Activated CD4-positive, alpha-beta memory T cell treated with anti-CD3 and anti-CD28 coated beads for 36 hours (primary cell): ENCODE measurements at regions of chr11 and their contacts with region 1.

Region 1: DNA sequence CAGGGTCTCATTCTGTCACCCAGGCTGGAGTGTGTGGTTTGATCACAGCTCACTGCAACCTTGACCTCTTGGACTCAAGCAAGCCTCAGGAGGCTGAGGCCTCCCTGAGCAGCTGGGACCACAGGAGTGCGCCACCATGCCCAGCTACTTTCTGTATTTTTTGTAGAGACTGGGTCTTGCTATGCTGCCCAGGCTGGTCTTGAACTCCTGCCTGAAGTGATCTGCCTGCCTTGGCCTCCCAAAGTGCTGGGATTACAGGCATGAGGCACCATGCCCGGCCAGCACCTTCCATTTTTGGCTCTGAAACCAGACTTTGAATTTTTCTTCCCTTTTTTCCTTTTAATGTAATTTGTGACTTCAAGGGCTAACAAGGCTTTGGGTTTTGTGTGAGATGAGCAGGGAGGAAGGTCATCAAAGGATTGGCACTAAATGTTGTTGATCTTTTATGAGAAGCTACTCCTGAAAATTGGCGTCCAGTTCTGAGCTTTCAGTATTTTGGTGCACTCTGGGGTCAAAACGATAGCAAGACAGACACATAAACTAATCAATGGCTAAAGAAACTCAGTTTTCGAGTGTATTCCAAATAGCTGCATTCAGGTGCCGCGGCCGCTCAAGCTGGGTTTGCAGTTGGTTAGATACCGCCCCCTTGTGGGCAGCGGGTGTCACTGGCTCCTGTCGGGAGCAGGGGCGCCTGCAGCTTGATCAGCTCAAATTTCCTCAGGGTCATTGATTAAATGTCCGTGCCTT is 51.9 kb upstream of the CLMP start:
- DNase-seq: peak; percentile 89
- H3K4me3 Mint-ChIP-seq: no peak overlapping the region
- H3K27ac Mint-ChIP-seq: no peak overlapping the region
- H3K4me1 Mint-ChIP-seq: peaks cover 6% of the 10 kb centered on the region
- H3K27me3 Mint-ChIP-seq: peaks cover 4% of the 10 kb centered on the region

Region 2: DNA sequence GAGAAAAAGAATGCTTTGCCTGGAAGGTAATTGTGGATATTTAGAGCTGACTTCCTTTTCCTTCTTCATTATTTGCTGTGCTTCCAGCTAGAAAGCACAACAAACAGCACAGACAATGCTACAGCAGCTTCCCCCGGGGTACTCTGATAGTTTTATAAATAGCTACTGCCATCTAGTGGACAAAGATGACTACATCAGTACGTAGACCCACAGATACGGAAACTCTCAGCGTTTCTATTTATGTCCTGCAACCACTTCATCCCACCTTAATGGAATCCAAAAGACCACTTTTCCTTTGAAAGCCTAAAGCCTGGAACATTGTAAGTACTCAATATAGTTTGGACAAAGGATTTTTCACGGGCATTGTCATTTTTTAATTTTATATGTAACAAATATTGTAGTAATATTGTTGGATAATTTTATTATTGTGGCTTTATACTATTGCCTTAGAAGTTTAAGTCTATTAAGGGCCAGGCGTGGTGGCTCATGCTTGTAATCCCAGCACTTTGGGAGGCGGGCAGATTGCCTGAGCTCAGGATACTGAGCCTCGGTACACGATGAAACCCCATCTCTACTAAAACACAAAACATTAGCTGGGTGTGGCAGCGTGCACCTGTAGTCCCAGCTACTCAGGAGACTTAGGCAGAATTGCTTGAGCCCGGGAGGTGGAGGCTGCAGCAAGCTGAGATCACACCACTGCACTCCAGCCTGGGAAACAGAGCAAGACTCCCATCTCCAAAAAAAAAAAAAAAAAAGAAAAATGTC is 192.4 kb before region 1 on chr11:
- CTCF ChIA-PET with region 1: interaction called, 20 read pairs
- POLR2A ChIA-PET with region 1: no interaction called
- intact Hi-C with region 1: no loop called
- DNase-seq: no peak
- H3K4me3 Mint-ChIP-seq: no peak overlapping the region
- H3K27ac Mint-ChIP-seq: peak overlapping the region; percentile 100
- H3K4me1 Mint-ChIP-seq: peaks cover 47% of the 10 kb centered on the region
- H3K27me3 Mint-ChIP-seq: no peaks in the 10 kb centered on the region

Region 3: GRCh38 chr11:123110356-123110755 is 136.6 kb before region 1 on chr11:
- CTCF ChIA-PET with region 1: interaction called, 351 read pairs
- POLR2A ChIA-PET with region 1: no interaction called
- intact Hi-C with region 1: loop called (anchors 1 kb)
- DNase-seq: no peak
- H3K4me3 Mint-ChIP-seq: no peak overlapping the region
- H3K27ac Mint-ChIP-seq: no peak overlapping the region
- H3K4me1 Mint-ChIP-seq: peaks cover 4% of the 10 kb centered on the region
- H3K27me3 Mint-ChIP-seq: no peaks in the 10 kb centered on the region

Region 4: GRCh38 chr11:123152956-123153355 is 94.0 kb before region 1 on chr11:
- CTCF ChIA-PET with region 1: interaction called, 11 read pairs
- POLR2A ChIA-PET with region 1: no interaction called
- intact Hi-C with region 1: no loop called
- DNase-seq: no peak
- H3K4me3 Mint-ChIP-seq: no peak overlapping the region
- H3K27ac Mint-ChIP-seq: no peak overlapping the region
- H3K4me1 Mint-ChIP-seq: no peaks in the 10 kb centered on the region
- H3K27me3 Mint-ChIP-seq: peaks cover 7% of the 10 kb centered on the region

Region 5: GRCh38 chr11:123235117-123235655 is 11.7 kb before region 1 on chr11:
- CTCF ChIA-PET with region 1: interaction called, 16 read pairs
- POLR2A ChIA-PET with region 1: no interaction called
- intact Hi-C with region 1: no loop called
- DNase-seq: peak; percentile 58
- H3K4me3 Mint-ChIP-seq: no peak overlapping the region
- H3K27ac Mint-ChIP-seq: no peak overlapping the region
- H3K4me1 Mint-ChIP-seq: peaks cover 15% of the 10 kb centered on the region
- H3K27me3 Mint-ChIP-seq: no peaks in the 10 kb centered on the region

Region 6: GRCh38 chr11:123286761-123287160 is 39.8 kb after region 1 on chr11:
- CTCF ChIA-PET with region 1: no interaction called
- POLR2A ChIA-PET with region 1: no interaction called
- intact Hi-C with region 1: no loop called
- DNase-seq: no peak
- H3K4me3 Mint-ChIP-seq: no peak overlapping the region
- H3K27ac Mint-ChIP-seq: no peak overlapping the region
- H3K4me1 Mint-ChIP-seq: no peaks in the 10 kb centered on the region
- H3K27me3 Mint-ChIP-seq: peaks cover 13% of the 10 kb centered on the region

Region 7: GRCh38 chr11:123478352-123478987 is 231.5 kb after region 1 on chr11:
- CTCF ChIA-PET with region 1: interaction called, 23 read pairs
- POLR2A ChIA-PET with region 1: no interaction called
- intact Hi-C with region 1: no loop called
- DNase-seq: peak; percentile 38
- H3K4me3 Mint-ChIP-seq: peak overlapping the region; percentile 27
- H3K27ac Mint-ChIP-seq: peak overlapping the region; percentile 56
- H3K4me1 Mint-ChIP-seq: peaks cover 43% of the 10 kb centered on the region
- H3K27me3 Mint-ChIP-seq: no peaks in the 10 kb centered on the region